ENCODE measurements at regions of chr1 and their contacts with region 1.

Region 1: DNA sequence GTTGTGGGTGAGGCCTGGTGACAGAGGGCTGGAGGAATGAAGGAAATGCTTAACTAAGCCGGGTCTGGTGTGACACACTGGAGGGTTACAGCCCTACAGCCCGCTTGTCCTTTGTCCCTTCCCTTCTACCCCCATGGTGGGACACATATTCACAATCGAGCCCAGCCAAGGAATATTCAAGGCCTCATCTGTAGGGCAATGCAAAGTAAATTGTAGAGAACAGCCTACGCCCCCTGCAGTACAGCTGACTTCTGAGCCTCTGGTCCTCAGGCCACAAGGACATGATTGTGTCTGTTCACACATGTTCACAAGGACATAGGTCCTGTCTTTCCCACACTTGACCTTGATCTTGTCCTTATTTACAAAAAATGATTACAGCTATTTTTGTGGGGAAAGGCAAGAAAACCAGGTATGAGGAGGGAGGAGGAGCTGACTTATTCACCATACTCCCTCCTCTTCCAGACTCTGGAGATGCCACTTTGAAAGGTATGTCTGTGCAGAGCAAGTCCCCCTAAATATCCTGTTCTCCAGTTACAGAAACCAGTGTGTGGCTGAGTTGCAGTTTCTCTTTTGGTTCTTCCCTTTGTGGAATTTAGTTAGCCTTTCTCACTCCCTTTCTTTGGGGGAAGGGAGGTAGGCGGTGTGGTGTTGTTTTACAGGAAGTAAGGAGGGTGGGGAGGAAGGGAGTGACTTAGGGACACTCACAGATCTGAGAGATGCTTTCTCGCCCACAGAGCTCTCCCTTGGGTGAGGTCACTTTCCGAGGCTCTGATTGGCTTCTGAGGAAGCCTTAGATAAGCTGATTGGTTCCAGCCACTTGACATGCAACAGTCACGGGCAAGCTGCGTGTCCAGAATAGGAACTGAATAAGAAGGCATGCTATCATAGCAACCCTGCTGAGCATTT is 14.6 kb downstream of the POLR3GL start:
- DNase-seq: peak; percentile 50
- ATAC-seq: peak; percentile 53
- H3K4me3 ChIP-seq: no peak overlapping the region
- H3K27ac ChIP-seq: no peak overlapping the region
- H3K4me1 ChIP-seq: peaks cover 66% of the 10 kb centered on the region
- H3K27me3 ChIP-seq: no peaks in the 10 kb centered on the region
- CTCF ChIP-seq: peak; percentile 47
- EP300 ChIP-seq: no peak
- POLR2A ChIP-seq: no peak
- RAD21 ChIP-seq: no peak

Region 2: DNA sequence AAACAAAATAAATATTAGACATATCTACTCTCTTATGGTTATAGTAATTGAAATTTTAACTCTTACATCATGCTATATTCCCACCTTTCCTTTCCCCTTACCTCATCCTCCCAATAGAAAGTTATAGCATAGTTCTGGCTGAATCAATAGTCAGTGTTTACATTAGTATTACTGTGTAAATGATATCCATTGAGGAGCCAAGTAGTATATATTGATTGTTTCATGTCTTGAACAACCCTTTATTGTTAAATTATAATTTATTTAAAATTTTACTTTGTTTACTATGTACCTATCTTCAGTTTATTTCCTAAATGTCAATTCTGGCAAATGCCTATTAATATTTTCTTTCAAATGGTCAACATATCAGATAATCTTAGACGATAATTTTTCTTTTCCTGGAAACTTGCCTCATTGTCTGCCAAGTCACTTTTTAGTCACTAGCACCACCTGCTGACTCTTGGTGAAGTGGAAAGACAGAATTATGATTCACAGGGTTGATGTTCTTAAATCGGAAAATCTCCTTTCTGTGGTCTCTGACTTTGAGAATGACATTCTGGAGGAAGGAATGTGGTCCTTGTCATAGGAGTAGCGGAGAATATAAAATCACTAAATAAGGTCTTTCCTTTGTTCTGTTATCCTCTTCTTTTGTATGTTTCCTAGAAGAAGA is 33.8 kb after region 1 on chr1:
- CTCF ChIA-PET with region 1: interaction called, 60 read pairs
- POLR2A ChIA-PET with region 1: interaction called, 9 read pairs
- in situ Hi-C with region 1: loop called (anchors 5 kb)
- intact Hi-C with region 1: no loop called
- DNase-seq: peak; percentile 63
- ATAC-seq: peak; percentile 54
- H3K4me3 ChIP-seq: no peak overlapping the region
- H3K27ac ChIP-seq: no peak overlapping the region
- H3K4me1 ChIP-seq: peaks cover 22% of the 10 kb centered on the region
- H3K27me3 ChIP-seq: no peaks in the 10 kb centered on the region
- CTCF ChIP-seq: peak; percentile 79
- EP300 ChIP-seq: no peak
- POLR2A ChIP-seq: no peak
- RAD21 ChIP-seq: peak; percentile 76

Measured in HepG2 (cell line).